OCI-LY7 (cell line): ENCODE measurements at regions of chr14 and their contacts with region 1.

Region 1: GRCh38 chr14:67666750-67667449 is 7.5 kb downstream of the VTI1B start:
- DNase-seq: peak; percentile 63
- H3K4me3 ChIP-seq: no peak overlapping the region
- H3K27ac ChIP-seq: no peak overlapping the region
- H3K4me1 ChIP-seq: peaks cover 21% of the 10 kb centered on the region
- CTCF ChIP-seq: peak; percentile 86

Region 2: GRCh38 chr14:67467179-67468080 is 199.5 kb before region 1 on chr14:
- CTCF ChIA-PET with region 1: no interaction called
- POLR2A ChIA-PET with region 1: no interaction called
- intact Hi-C with region 1: no loop called
- DNase-seq: peak; percentile 29
- H3K4me3 ChIP-seq: no peak overlapping the region
- H3K27ac ChIP-seq: no peak overlapping the region
- H3K4me1 ChIP-seq: no peaks in the 10 kb centered on the region
- CTCF ChIP-seq: peak; percentile 68

Region 3: GRCh38 chr14:67619446-67620216 is 47.3 kb before region 1 on chr14 and contains the start of gene ARG2:
- CTCF ChIA-PET with region 1: no interaction called
- POLR2A ChIA-PET with region 1: no interaction called
- intact Hi-C with region 1: loop called (anchors 1 kb)
- DNase-seq: peak; percentile 85
- H3K4me3 ChIP-seq: peak within 1 kb of the TSS; percentile 70
- H3K27ac ChIP-seq: no peak within 1 kb of the TSS
- H3K4me1 ChIP-seq: peaks cover 25% of the 10 kb centered on the region
- CTCF ChIP-seq: no peak; the same call in 1 of the 2 replicates
- total RNA-seq, gene ARG2: 2.9 and 4.2 TPM in 2 replicates